Activated CD8-positive, alpha-beta memory T cell treated with anti-CD3 and anti-CD28 coated beads, Interleukin-2, amount 10 ng/mL, durations not matched to agents 7 days and 5 days (primary cell): ENCODE measurements at regions of chr14 and their contacts with region 1.

Region 1: DNA sequence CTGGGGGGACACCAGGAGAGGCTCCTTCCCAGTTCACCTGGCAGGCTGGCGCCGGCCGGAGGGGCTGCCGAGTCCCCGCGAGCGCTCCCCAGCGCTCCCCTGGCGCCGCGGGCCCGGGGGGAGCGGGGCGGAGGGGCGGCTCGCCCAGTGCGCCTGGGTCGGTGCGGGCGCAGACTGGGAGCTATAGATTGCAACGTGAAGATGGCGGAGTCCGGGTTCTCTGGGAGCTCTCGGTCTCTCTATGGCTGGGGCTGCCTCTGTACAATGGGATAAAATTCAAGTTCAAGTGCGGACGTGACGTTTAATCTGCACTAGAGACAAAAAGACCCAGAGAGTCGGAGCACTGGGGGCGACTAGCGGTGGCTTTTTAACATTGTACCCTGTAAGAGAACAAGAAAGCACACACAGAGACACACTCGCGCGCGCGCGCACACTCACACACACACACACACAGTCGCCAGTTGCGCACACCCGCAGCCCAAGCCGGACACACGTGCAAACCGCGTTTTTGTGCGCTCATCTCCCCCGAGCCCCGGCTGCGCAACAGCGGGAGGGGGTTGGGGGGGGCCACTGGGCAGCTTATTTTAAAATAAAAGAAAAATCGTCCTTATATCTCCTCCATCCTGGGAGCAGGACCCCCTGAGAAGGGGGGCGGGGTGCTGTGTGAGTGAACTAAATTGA is at the start of gene BCL11B:
- DNase-seq: peak; percentile 96
- ATAC-seq: peak; percentile 71
- H3K4me3 Mint-ChIP-seq: peak within 1 kb of the TSS; percentile 96
- H3K27ac Mint-ChIP-seq: peak within 1 kb of the TSS; percentile 99
- H3K4me1 Mint-ChIP-seq: peaks cover 26% of the 10 kb centered on the region
- H3K27me3 Mint-ChIP-seq: peaks cover 13% of the 10 kb centered on the region
- total RNA-seq, gene BCL11B: 53.0 to 66.2 TPM

Region 2: DNA sequence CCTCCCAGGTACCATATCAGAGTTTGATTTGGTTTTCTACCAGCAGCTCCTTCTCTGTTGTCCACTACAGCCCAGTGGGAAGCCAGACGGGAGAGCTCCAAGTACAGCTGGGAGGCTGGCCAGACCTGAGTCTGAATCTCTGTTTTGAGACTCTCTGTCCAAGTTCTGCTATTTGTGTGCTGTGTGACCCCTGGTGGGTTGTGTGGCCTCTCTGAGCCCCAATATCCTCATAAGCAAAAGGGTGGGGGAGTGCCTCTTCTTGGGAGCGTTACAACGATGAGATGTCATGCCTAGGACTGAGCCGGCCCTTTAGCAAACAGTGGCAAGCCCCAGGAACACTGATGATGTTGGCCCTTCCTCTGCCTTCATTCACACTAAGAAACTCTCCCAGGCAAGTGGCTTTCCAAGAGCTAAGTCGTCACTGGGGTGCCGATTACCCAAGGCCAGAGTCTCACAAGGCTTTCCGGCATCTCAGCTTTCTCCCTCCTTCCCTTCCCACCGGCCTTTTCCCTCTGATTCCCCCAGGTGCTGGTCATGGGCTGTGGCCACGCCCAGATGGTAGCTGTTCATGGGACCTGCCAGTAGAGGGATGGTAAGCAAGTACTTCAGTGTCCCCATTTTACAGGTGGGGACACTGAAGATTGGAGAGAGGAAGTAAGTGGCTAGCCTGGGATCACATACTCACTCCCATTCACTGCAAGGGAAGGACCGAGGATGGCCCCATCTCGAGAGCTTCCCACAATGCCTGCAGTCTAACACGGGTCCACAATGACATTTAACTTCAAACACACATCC is 47.8 kb before region 1 on chr14:
- CTCF ChIA-PET with region 1: interaction called, 395 read pairs
- DNase-seq: no peak
- ATAC-seq: no peak
- H3K4me3 Mint-ChIP-seq: no peak overlapping the region
- H3K27ac Mint-ChIP-seq: peak overlapping the region; percentile 91
- H3K4me1 Mint-ChIP-seq: peaks cover 90% of the 10 kb centered on the region
- H3K27me3 Mint-ChIP-seq: no peaks in the 10 kb centered on the region

Region 3: DNA sequence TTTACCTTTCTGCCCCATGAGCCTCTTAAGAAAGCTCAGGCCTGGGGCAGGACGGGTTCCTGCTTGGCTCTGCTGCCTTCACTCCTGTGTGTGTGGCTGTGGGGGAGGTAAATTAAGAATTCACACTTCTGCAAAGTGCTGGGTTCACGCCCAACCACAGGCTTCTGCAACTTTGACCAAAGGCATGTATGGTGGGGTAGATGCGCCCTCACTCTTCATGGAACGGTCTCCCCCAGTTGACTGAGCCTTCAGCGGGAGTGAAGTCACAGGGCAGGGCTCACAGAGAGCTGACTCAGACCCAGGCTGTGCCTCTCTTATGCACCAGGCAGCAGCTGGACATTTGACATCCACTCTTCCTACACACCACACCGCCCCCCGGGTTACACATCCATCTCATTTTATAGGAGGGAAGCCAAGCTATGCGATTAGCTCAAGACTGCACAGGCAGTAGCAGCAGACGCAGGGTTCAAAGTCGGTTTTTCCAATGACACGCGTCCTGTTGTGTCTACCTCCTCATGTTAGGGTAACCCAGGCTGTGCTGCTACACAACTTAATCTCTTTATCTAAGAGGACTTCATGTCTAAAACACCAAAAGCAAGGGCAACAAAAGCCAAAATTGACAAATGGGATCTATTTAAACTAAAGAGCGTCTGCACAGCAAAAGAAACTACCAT is 15.3 kb after region 1 on chr14:
- CTCF ChIA-PET with region 1: interaction called, 53 read pairs
- DNase-seq: peak; percentile 84
- ATAC-seq: peak; percentile 92
- H3K4me3 Mint-ChIP-seq: peak overlapping the region; percentile 80
- H3K27ac Mint-ChIP-seq: peak overlapping the region; percentile 92
- H3K4me1 Mint-ChIP-seq: peaks cover 26% of the 10 kb centered on the region
- H3K27me3 Mint-ChIP-seq: no peaks in the 10 kb centered on the region

Region 4: GRCh38 chr14:99348816-99349614 is 76.9 kb after region 1 on chr14:
- CTCF ChIA-PET with region 1: no interaction called
- DNase-seq: no peak
- ATAC-seq: no peak
- H3K4me3 Mint-ChIP-seq: no peak overlapping the region
- H3K27ac Mint-ChIP-seq: no peak overlapping the region
- H3K4me1 Mint-ChIP-seq: no peaks in the 10 kb centered on the region
- H3K27me3 Mint-ChIP-seq: peaks cover 7% of the 10 kb centered on the region

Region 5: DNA sequence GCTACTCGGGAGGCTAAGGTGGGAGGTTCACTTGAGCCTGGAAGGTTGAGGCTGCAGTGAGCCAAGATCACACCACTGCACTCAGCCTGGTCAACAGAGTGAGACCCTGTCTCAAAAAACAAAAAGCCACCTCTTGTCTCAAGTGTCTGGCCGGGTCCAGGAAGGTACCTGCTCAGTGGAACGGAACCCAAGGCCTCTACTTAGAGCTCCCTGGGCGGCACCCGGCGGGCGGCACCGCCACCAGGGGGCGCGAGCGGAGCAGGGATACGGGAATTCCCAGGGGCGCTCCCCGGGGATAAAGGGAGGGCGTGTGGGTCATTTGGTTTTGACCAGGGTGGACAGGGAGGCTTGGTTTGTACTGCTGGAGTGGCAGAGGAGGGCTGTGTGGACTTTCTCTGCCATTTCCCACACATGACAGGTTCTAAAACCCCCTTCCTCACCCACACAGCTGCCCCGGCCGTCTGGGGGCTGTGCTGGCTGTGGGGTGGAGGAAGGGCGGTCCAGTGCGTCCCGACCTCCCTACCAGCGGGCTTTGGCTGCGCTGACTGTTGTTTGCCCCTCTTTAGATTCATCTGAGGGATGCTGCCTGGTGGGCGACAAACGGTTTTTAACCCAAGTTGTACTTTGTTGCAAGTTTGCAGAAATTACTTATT is 117.2 kb after region 1 on chr14:
- CTCF ChIA-PET with region 1: no interaction called
- DNase-seq: no peak
- ATAC-seq: peak; percentile 25
- H3K4me3 Mint-ChIP-seq: no peak overlapping the region
- H3K27ac Mint-ChIP-seq: no peak overlapping the region
- H3K4me1 Mint-ChIP-seq: peaks cover 9% of the 10 kb centered on the region
- H3K27me3 Mint-ChIP-seq: peaks cover 13% of the 10 kb centered on the region